Heart left ventricle (tissue), 16 donors: ENCODE measurements at regions of chr9 and their contacts with region 1.

Region 1: GRCh38 chr9:68619636-68620035 is 79.0 kb upstream of the TMEM252 start:
- DNase-seq: no peak
- ATAC-seq: no peak
- H3K4me3 ChIP-seq: no peak overlapping the region
- H3K27ac ChIP-seq: no peak overlapping the region
- H3K4me1 ChIP-seq: no peaks in the 10 kb centered on the region
- H3K27me3 ChIP-seq: no peaks in the 10 kb centered on the region
- CTCF ChIP-seq: no peak
- POLR2A ChIP-seq: no peak

Region 2: DNA sequence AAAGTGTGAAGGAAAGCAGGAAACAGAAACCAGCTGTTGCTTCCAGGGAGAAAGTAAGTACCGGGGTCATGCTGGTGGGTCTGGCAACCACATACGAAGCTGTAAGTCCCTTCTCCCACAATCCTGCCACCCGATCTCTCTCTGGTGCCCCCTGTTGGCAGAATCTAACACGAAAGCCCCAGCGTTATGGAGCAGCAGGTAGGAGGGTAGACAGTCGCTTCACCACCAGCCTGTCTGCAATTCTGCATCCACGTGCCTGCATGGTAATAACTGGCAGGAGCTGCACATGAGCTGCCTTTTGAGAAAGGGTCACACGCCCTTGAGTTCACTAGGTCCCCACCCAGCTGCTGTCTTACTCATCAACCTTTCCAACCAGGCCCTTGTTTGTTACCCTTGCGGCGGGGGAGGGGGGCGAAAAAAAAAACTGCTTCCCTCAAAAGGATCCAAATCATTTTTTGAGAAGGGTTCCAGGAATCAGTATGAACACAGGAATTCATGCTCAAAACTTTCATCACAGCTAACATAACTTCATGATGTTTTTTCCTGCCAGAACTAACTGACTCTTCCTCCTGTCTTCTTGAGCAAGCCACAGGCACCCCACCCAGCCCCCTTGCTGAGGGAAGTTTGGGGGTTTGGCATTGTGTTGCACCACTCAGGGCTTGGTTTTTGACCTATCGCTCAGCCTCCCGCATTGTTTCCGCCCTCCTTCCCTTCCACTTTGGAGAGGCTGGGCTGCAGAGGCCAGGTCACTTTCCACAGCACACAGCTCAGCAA is 59.4 kb before region 1 on chr9:
- intact Hi-C with region 1: no loop called
- DNase-seq: peak; percentile 46 to 69 (median 55)
- ATAC-seq: peak; percentile 21 to 78 (median 70)
- H3K4me3 ChIP-seq: peak overlapping the region in 1 of 12 donors; percentile 17
- H3K27ac ChIP-seq: peak overlapping the region in 6 of 12 donors; percentile 2 to 69 (median 38)
- H3K4me1 ChIP-seq: peaks cover 0 to 26% (median 7%) of the 10 kb centered on the region in 12 donors
- H3K27me3 ChIP-seq: no peaks in the 10 kb centered on the region
- CTCF ChIP-seq: peak in 10 of 12 donors; percentile 29 to 57 (median 42)
- POLR2A ChIP-seq: no peak

Region 3: GRCh38 chr9:68678430-68678829 is 58.8 kb after region 1 on chr9:
- intact Hi-C with region 1: loop called in 4 of 10 experiments (anchors 10 kb)
- DNase-seq: peak in 2 of 5 donors; percentile 14 to 26
- ATAC-seq: peak in 3 of 4 donors; percentile 77 to 87 (median 82)
- H3K4me3 ChIP-seq: no peak overlapping the region
- H3K27ac ChIP-seq: peak overlapping the region in 1 of 12 donors; percentile 30
- H3K4me1 ChIP-seq: peaks cover 0 to 10% (median 0%) of the 10 kb centered on the region in 12 donors
- H3K27me3 ChIP-seq: peaks cover 0 to 7% (median 0%) of the 10 kb centered on the region in 9 donors
- CTCF ChIP-seq: peak in 8 of 12 donors; percentile 12 to 53 (median 40)
- POLR2A ChIP-seq: no peak

Region 4: DNA sequence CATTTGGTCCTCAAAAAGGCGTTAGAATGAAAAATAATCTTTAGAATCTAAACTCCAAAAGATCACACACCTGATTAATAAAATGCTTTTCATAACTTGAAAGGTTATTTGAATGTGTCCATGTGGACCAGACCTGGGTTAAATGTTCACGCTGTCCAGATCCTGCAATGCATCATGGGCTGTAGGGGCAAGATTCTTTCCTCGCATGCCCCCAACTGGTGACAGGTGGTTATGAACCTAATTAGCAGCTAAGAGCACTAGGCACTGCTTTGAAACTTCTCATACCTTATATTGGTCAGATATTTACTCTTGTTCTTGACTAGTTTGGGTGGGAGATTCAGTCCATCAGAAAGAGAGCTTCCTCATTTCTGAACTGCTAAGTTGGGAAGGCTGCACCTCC is 66.1 kb after region 1 on chr9:
- intact Hi-C with region 1: loop called in 2 of 10 experiments (anchors 10 kb)
- DNase-seq: no peak
- ATAC-seq: no peak
- H3K4me3 ChIP-seq: no peak overlapping the region
- H3K27ac ChIP-seq: no peak overlapping the region
- H3K4me1 ChIP-seq: peaks cover 0 to 18% (median 4%) of the 10 kb centered on the region in 12 donors
- H3K27me3 ChIP-seq: peaks cover 0 to 5% (median 0%) of the 10 kb centered on the region in 9 donors
- CTCF ChIP-seq: peak in 7 of 12 donors; percentile 9 to 31 (median 20)
- POLR2A ChIP-seq: no peak

Region 5: DNA sequence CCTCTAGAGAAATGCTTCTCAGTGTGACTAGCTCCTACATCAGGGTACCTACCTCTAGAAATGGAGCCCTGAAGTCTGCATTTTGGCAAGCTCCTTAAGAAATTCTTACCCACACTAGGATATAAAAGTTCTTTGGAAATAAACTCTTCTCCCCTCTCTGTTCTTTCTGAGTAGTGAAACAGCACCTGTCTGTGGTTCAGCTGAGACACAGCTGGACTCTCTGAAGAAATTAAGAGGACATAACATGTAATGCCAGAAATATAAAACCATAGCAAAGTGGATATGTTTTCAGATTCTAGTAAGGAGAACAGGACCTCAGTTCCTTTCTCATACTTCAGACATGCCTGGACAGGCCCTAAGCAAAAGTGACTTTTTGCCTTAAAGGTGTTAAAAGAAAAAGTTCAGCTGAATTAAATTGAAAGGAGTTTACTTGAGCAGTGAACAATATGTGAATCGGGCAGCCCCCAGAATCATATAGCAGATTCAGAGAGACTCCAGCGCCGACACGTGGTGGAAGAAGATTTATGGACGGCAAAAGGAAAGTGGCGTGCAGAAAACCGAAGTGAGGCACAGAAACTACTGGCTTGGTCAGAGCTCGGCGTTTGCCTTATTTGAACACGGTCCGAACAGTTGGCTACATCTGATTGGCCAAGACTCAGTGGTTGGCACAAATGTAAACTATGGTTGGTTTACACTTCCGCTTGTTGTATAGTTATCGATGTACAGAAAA is 329.8 kb after region 1 on chr9:
- intact Hi-C with region 1: no loop called
- DNase-seq: no peak
- ATAC-seq: peak in 3 of 4 donors; percentile 7 to 52 (median 38)
- H3K4me3 ChIP-seq: no peak overlapping the region
- H3K27ac ChIP-seq: no peak overlapping the region
- H3K4me1 ChIP-seq: peaks cover 0 to 7% (median 0%) of the 10 kb centered on the region in 12 donors
- H3K27me3 ChIP-seq: no peaks in the 10 kb centered on the region
- CTCF ChIP-seq: peak in 7 of 12 donors; percentile 9 to 28 (median 16)
- POLR2A ChIP-seq: no peak